ENCODE measurements at regions of chr3 and their contacts with region 1.

Region 1: GRCh38 chr3:111967651-111968274 is 11.1 kb upstream of the ABHD10 start:
- DNase-seq: peak; percentile 76 to 96 (median 89)

Region 2: GRCh38 chr3:111717601-111718000 is 250.2 kb before region 1 on chr3:
- intact Hi-C with region 1: loop called (anchors 2 kb)
- DNase-seq: peak; percentile 38 to 91 (median 78)

Measured in head of caudate nucleus (tissue), 42 donors.